ENCODE measurements at regions of chr12 and their contacts with region 1.

Region 1: DNA sequence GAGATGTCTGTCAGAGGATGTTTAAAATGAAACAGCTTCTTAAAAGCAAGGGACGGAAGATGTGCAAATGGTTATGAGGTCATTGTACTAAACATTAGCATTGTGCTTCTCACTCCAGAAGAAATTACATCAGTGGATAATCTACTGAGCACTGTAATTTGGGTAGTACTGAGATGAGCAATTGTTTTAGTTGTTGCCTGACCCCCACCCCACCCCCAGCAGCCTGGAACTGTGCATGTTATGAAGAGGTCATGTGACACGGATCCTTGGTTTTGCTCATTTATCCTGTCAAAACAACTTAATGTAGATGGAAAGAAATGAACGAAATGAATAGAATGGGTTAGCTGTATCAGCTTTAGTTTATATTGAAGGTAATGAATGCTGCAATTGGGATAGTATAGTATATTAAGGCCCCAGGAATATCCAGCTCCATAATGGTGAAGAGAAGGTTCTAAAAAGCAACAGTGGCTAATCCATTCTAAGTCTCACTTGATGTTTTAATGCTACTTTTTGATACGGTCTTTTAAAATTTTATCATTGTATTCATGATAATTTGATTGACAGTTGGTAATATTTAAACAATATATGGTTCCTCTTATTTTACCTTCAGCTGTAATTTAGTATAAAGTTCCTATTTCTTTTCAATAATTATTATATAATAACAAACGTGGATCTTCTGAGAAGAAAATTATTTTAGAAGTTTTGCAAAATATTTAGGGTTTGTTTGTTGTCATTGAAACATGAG is 58.5 kb downstream of the WNK1 start:
- DNase-seq: no peak
- H3K4me3 ChIP-seq: no peak overlapping the region
- H3K27ac ChIP-seq: no peak overlapping the region
- H3K4me1 ChIP-seq: peaks cover 3% of the 10 kb centered on the region
- H3K27me3 ChIP-seq: no peaks in the 10 kb centered on the region
- CTCF ChIP-seq: no peak

Region 2: DNA sequence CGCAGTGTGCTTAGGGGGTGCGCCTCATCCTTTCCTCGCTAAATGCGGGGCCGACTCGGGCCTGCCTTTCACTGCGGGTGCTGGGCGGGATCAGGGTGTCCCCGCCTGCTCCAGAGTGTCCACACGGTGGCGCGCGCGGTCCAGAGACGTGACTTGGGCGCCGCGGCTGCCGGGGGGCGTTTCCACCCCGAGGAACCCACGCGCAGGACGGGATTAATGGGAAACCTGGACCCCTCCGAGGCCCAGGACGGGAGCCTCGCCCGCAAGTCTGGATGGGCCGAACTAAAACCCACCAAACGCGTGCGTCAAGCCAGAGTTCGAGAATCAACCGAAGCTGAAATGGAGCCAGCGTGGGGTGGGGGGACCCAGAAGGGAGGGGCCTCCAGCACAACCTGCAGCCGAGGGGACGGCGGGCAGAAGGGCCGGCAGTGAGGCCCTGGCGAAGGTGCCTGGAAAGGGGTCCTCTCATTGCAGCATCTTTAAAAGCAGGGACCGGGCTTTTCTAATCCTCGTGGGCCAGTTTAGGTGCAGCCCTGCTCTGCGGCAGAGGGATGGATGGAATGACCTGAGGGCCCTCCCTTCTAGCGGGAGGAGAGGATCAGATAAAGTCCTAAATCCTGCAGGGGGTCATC is 240.9 kb before region 1 on chr12:
- intact Hi-C with region 1: loop called (anchors 2 kb)
- DNase-seq: peak; percentile 93
- H3K4me3 ChIP-seq: peak overlapping the region; percentile 55
- H3K27ac ChIP-seq: peak overlapping the region; percentile 95
- H3K4me1 ChIP-seq: peaks cover 5% of the 10 kb centered on the region
- H3K27me3 ChIP-seq: no peaks in the 10 kb centered on the region
- CTCF ChIP-seq: peak; percentile 97

Region 3: GRCh38 chr12:575948-576612 is 234.8 kb before region 1 on chr12:
- intact Hi-C with region 1: loop called (anchors 2 kb)
- DNase-seq: peak; percentile 83
- H3K4me3 ChIP-seq: no peak overlapping the region
- H3K27ac ChIP-seq: peak overlapping the region; percentile 17
- H3K4me1 ChIP-seq: peaks cover 5% of the 10 kb centered on the region
- H3K27me3 ChIP-seq: no peaks in the 10 kb centered on the region
- CTCF ChIP-seq: peak; percentile 100

Region 4: GRCh38 chr12:751192-751998 is 59.4 kb before region 1 on chr12:
- intact Hi-C with region 1: loop called (anchors 10 kb)
- DNase-seq: peak; percentile 92
- H3K4me3 ChIP-seq: peak overlapping the region; percentile 95
- H3K27ac ChIP-seq: peak overlapping the region; percentile 98
- H3K4me1 ChIP-seq: peaks cover 7% of the 10 kb centered on the region
- H3K27me3 ChIP-seq: no peaks in the 10 kb centered on the region
- CTCF ChIP-seq: peak; percentile 60

Region 5: GRCh38 chr12:867905-868304 is 57.1 kb after region 1 on chr12:
- intact Hi-C with region 1: no loop called
- DNase-seq: no peak
- H3K4me3 ChIP-seq: no peak overlapping the region
- H3K27ac ChIP-seq: no peak overlapping the region
- H3K4me1 ChIP-seq: no peaks in the 10 kb centered on the region
- H3K27me3 ChIP-seq: no peaks in the 10 kb centered on the region
- CTCF ChIP-seq: no peak

Region 6: GRCh38 chr12:949453-950191 is 138.8 kb after region 1 on chr12 and contains the start of gene RAD52:
- intact Hi-C with region 1: loop called (anchors 10 kb)
- DNase-seq: peak; percentile 98
- H3K4me3 ChIP-seq: peak within 1 kb of the TSS; percentile 84
- H3K27ac ChIP-seq: peak within 1 kb of the TSS; percentile 98
- H3K4me1 ChIP-seq: no peaks in the 10 kb centered on the region
- H3K27me3 ChIP-seq: no peaks in the 10 kb centered on the region
- CTCF ChIP-seq: peak; percentile 98
- total RNA-seq, gene RAD52: 19.4 to 28.8 TPM

Measured in colonic mucosa (tissue), 4 donors.